ENCODE measurements at regions of chr7 and their contacts with region 1.

Region 1: DNA sequence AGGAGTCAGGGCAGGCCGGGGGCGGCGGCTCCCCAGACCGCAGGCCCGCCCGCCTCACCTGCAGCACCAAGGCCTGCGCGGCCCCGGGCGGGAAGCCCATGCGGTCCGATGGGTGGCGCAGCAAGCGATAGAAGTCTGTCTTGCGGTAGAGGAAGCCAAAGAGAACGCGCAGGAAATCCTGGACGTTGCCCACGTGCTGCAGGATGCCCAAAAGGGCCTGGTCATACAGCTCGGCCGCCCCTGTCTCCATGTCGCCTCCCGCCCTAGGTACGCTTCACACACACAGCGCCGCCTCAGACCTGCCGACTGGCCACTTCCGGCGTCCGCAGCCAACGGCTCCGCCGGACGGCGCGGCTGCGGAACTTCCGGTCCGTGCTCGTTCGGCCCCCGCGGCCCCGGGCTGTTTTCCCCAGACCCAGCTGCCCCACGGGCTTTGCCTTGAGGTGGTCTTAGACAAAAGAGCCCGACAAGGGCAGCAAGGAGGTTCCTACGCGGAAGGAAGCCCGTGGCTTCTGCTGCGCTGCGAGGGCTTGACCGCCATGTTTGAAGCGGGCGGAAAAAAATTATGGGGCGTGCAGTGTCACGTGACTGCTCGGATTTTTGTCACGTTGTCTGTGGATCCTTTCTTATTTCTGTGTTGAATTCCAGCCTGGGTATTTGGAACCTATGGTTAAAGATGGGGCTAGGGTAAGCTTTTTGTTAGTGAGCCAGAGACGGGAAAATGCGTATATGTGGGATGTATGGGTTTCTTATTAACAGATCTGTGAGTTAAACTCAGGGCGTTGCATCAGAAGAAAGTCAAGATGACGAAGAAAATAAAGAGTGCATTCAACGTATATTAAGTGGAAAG is at the start of gene NUDCD3:
- DNase-seq: peak; percentile 81 to 84 (median 83)
- H3K4me3 ChIP-seq: peak within 1 kb of the TSS; percentile 90 to 96
- H3K4me3 Mint-ChIP-seq: peak within 1 kb of the TSS; percentile 84 to 99 (median 93)
- H3K27ac ChIP-seq: peak within 1 kb of the TSS; percentile 93
- H3K27ac Mint-ChIP-seq: peak within 1 kb of the TSS; percentile 77 to 98 (median 96)
- H3K4me1 ChIP-seq: peaks cover 44% of the 10 kb centered on the region
- H3K4me1 Mint-ChIP-seq: peaks cover 37 to 52% (median 42%) of the 10 kb centered on the region in 4 donors
- H3K27me3 ChIP-seq: no peaks in the 10 kb centered on the region
- H3K27me3 Mint-ChIP-seq: no peaks in the 10 kb centered on the region
- total RNA-seq, gene NUDCD3: 100 to 108 TPM

Region 2: DNA sequence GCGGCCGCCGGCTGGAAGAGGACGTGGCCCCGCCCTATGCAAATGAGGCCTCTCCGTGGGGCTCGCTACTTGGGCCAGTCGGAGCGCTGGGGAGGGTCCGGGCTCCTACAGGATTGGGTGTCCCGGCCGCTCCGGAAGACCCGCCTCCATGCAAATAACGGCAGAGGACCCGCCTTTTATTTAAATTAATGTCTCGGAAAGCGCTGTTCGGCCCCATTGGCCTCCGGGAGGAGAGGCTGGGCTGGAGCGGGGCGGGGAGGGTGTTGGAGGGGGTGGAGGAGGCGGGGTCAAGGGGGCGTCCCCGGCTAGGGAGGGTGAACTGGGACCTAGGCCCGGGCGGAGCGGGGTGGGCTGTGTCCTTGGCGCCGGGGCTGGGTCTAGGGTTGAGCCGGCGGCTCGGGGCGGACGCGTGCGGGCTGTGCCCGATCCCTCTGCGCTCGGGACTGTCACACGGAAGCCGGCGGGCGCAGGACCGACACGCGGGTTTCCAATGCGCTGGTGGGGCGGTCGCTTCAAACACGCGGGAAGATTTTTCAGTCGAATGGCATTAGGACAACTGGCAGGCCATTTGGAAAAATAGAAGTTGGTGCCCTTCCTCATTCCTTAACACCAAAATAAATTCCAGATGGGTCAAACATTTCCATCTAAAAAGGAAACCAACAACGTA is 407.9 kb before region 1 on chr7:
- CTCF ChIA-PET with region 1: no interaction called
- POLR2A ChIA-PET with region 1: interaction called, 7 read pairs
- intact Hi-C with region 1: loop called (anchors 1 kb)
- DNase-seq: peak; percentile 96 to 99 (median 99)
- H3K4me3 ChIP-seq: peak overlapping the region; percentile 42 to 62
- H3K4me3 Mint-ChIP-seq: peak overlapping the region; percentile 80 to 95 (median 86)
- H3K27ac ChIP-seq: peak overlapping the region; percentile 81
- H3K27ac Mint-ChIP-seq: peak overlapping the region; percentile 57 to 93 (median 78)
- H3K4me1 ChIP-seq: peaks cover 23% of the 10 kb centered on the region
- H3K4me1 Mint-ChIP-seq: peaks cover 15 to 39% (median 20%) of the 10 kb centered on the region in 4 donors
- H3K27me3 ChIP-seq: no peaks in the 10 kb centered on the region
- H3K27me3 Mint-ChIP-seq: no peaks in the 10 kb centered on the region

Region 3: GRCh38 chr7:44232396-44232795 is 258.2 kb before region 1 on chr7:
- CTCF ChIA-PET with region 1: no interaction called
- POLR2A ChIA-PET with region 1: no interaction called
- intact Hi-C with region 1: no loop called
- DNase-seq: no peak
- H3K4me3 ChIP-seq: no peak overlapping the region
- H3K4me3 Mint-ChIP-seq: no peak overlapping the region
- H3K27ac ChIP-seq: no peak overlapping the region
- H3K27ac Mint-ChIP-seq: no peak overlapping the region
- H3K4me1 ChIP-seq: no peaks in the 10 kb centered on the region
- H3K4me1 Mint-ChIP-seq: no peaks in the 10 kb centered on the region
- H3K27me3 ChIP-seq: no peaks in the 10 kb centered on the region
- H3K27me3 Mint-ChIP-seq: no peaks in the 10 kb centered on the region

Region 4: GRCh38 chr7:44257618-44258422 is 232.8 kb before region 1 on chr7:
- CTCF ChIA-PET with region 1: no interaction called
- POLR2A ChIA-PET with region 1: interaction called, 12 read pairs
- intact Hi-C with region 1: no loop called
- DNase-seq: peak; percentile 53 to 75 (median 59)
- H3K4me3 ChIP-seq: peak overlapping the region in 1 of 2 donors; percentile 12
- H3K4me3 Mint-ChIP-seq: peak overlapping the region; percentile 9 to 87 (median 72)
- H3K27ac ChIP-seq: peak overlapping the region; percentile 66
- H3K27ac Mint-ChIP-seq: peak overlapping the region; percentile 75 to 95 (median 92)
- H3K4me1 ChIP-seq: peaks cover 28% of the 10 kb centered on the region
- H3K4me1 Mint-ChIP-seq: peaks cover 13 to 30% (median 19%) of the 10 kb centered on the region in 4 donors
- H3K27me3 ChIP-seq: no peaks in the 10 kb centered on the region
- H3K27me3 Mint-ChIP-seq: no peaks in the 10 kb centered on the region

Region 5: DNA sequence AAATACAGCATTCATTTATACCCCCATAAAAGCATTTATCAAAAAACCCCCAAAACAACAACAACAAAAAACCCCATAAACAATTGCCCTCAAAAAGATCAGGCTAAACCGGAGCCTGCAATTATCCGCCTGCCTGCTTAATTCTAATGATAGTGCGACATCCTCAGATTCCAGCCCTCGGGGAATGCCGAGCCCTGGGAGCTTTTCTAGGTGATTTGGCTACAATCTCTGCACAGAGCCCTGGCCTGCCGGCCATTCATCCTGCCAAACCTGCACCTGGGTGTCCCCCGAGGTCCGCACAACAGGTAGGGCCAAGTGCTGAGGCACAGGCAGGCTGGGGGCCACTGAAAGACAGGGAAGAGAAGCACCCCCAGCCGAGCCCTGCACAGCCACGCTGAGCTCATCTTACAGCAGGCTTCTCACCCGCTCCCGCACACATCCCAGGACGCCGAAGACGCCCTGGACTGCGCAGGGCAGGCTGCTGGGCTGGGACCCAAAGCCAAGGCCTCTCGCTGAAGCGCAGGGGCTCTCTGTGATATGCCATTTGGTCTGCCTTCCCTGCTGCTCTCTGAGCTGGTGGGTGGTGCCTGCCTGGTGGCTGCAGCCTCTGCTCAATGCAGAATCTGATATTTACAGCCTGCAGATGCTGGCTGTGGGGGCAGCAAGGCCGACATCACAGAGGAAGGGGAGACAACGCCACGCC is 222.7 kb before region 1 on chr7:
- CTCF ChIA-PET with region 1: no interaction called
- POLR2A ChIA-PET with region 1: no interaction called
- intact Hi-C with region 1: no loop called
- DNase-seq: no peak
- H3K4me3 ChIP-seq: no peak overlapping the region
- H3K4me3 Mint-ChIP-seq: no peak overlapping the region
- H3K27ac ChIP-seq: no peak overlapping the region
- H3K27ac Mint-ChIP-seq: no peak overlapping the region
- H3K4me1 ChIP-seq: no peaks in the 10 kb centered on the region
- H3K4me1 Mint-ChIP-seq: no peaks in the 10 kb centered on the region
- H3K27me3 ChIP-seq: no peaks in the 10 kb centered on the region
- H3K27me3 Mint-ChIP-seq: no peaks in the 10 kb centered on the region

Region 6: DNA sequence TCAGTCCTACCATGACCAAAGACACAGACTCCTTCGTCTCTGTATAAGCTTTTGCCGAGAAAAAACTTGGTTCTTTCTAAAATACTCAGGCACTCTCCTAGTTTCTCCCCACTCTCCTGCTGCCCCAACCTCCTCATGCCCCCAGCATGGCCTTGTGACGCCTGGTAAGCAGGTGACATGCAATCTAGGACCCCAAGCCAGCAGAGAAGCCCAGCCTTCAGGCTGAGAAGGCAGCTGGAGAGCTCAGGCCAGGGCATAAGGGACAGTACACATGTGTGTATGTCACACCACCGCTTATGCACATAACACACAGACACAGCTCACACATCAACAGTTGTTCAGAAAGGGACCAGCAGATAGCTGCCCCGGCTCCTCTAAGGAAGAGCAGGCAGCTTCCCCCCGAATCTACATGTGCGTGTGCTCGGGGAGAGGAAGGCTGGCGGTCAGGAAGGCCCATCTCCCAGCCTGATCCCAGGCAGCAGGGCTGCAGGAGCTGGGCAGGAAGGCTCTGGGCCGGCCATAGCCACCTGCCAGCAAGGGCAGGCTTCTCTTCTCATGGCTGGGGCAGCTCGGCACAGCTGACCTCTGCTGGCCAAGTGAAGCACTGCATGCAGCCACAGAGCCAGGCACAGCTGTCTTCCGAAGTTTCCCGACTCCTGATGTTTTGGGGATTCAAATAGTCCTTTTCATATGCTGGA is 74.7 kb after region 1 on chr7:
- CTCF ChIA-PET with region 1: interaction called, 5 read pairs
- POLR2A ChIA-PET with region 1: interaction called, 10 read pairs
- intact Hi-C with region 1: loop called (anchors 2 kb)
- DNase-seq: peak; percentile 50 to 67 (median 58)
- H3K4me3 ChIP-seq: no peak overlapping the region
- H3K4me3 Mint-ChIP-seq: peak overlapping the region in 1 of 8 donors; percentile 11
- H3K27ac ChIP-seq: no peak overlapping the region
- H3K27ac Mint-ChIP-seq: peak overlapping the region in 6 of 7 donors; percentile 50 to 87 (median 72)
- H3K4me1 ChIP-seq: peaks cover 10% of the 10 kb centered on the region
- H3K4me1 Mint-ChIP-seq: peaks cover 1 to 11% (median 7%) of the 10 kb centered on the region in 4 donors
- H3K27me3 ChIP-seq: no peaks in the 10 kb centered on the region
- H3K27me3 Mint-ChIP-seq: no peaks in the 10 kb centered on the region

Region 7: DNA sequence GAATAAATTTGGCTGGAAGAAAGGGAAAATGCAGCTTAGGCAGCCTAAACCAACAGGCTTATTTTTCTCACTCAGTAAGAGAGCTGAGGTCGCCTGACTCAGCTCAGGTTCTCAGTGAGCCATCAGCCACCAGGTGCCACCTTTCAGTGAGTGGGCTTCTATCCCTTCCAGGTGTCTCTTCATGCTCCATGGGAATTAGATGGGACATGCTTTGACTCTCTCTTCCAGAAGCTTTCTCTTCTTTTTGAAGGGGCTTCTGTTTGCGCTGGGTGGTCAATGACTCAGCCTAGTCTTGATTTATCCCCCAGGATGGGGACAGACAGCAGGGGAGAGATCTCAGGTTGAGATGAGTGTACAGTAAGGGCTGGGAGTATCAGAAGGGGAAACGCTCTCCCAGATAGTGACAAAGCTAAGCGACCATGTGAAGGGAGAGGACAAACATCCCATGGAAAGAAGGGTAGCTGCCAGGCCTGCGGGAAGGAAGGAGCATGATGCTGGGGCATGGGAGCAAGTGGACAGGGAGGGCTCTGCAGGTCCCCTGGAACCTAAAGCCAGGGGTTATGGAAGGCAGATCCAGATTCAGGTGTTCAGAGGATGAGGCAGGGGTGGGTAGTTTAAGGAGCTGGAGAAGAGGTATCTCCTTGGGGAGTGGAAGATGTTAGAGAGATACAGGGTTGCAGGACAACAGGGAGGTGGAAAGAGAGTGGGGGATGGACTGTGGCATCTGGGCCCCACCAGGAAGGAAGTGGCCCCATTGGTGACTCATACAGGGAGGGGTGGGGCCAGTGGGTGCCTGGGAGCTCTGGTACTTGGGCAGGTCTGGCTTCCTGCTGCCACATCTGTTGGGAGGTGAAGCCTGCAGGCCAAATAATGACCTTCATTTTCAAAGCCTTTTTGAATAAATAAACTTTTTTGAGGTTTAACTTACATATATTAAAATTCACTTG is 148.3 kb after region 1 on chr7:
- CTCF ChIA-PET with region 1: no interaction called
- POLR2A ChIA-PET with region 1: interaction called, 13 read pairs
- intact Hi-C with region 1: no loop called
- DNase-seq: peak; percentile 72 to 91 (median 79)
- H3K4me3 ChIP-seq: peak overlapping the region; percentile 0 to 48
- H3K4me3 Mint-ChIP-seq: peak overlapping the region; percentile 32 to 95 (median 90)
- H3K27ac ChIP-seq: peak overlapping the region; percentile 96
- H3K27ac Mint-ChIP-seq: peak overlapping the region; percentile 97 to 100 (median 100)
- H3K4me1 ChIP-seq: peaks cover 90% of the 10 kb centered on the region
- H3K4me1 Mint-ChIP-seq: peaks cover 57 to 87% (median 79%) of the 10 kb centered on the region in 4 donors
- H3K27me3 ChIP-seq: no peaks in the 10 kb centered on the region
- H3K27me3 Mint-ChIP-seq: no peaks in the 10 kb centered on the region